HCT116 (cell line): ENCODE measurements at regions of chr11 and their contacts with region 1.

Region 1: GRCh38 chr11:8964324-8965320 is at the start of gene TMEM9B:
- DNase-seq: peak; percentile 78
- ATAC-seq: peak; percentile 86
- H3K4me3 ChIP-seq: peak within 1 kb of the TSS; percentile 85 to 88
- H3K27ac ChIP-seq: peak within 1 kb of the TSS; percentile 97
- H3K4me1 ChIP-seq: peaks cover 10 to 25% of the 10 kb centered on the region in 2 experiments
- H3K27me3 ChIP-seq: no peaks in the 10 kb centered on the region
- CTCF ChIP-seq: no peak
- POLR2A ChIP-seq: peak; percentile 66
- RAD21 ChIP-seq: no peak
- total RNA-seq, gene TMEM9B: 26.8 TPM

Region 2: GRCh38 chr11:8688414-8689362 is 275.9 kb before region 1 on chr11:
- CTCF ChIA-PET with region 1: interaction called, 4 read pairs
- POLR2A ChIA-PET with region 1: interaction called, 3 read pairs
- RAD21 ChIA-PET with region 1: interaction called in 1 of 2 experiments, 3 read pairs
- intact Hi-C with region 1: loop called (anchors 5 kb)
- DNase-seq: peak; percentile 97
- ATAC-seq: peak; percentile 86
- H3K4me3 ChIP-seq: peak overlapping the region; percentile 63
- H3K27ac ChIP-seq: peak overlapping the region; percentile 97
- H3K4me1 ChIP-seq: peaks cover 27 to 59% of the 10 kb centered on the region in 2 experiments
- H3K27me3 ChIP-seq: no peaks in the 10 kb centered on the region
- CTCF ChIP-seq: peak in 1 of 3 experiments; percentile 13; a peak in 2 of 6 replicates
- POLR2A ChIP-seq: peak; percentile 90
- RAD21 ChIP-seq: no peak

Region 3: DNA sequence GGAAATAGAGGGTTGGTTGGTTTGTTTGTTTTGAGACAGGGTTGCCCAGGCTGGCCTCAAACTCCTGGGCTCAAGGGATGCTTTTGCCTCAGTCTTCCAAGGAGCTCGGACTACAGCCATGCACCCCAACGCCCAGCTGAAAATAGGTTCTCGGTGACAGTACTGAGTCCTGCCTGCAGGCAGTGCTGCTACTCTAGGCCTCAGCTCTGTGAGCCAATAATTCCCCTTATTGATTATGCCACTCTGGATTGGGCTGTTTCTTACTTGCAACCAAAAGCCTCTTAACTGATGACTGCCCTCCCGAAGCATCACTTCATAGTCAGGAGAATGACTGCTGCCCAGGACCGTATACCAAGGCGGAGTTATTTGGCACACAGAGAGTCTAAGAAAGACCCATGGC is 30.7 kb before region 1 on chr11:
- CTCF ChIA-PET with region 1: interaction called, 10 read pairs
- POLR2A ChIA-PET with region 1: interaction called, 3 read pairs
- RAD21 ChIA-PET with region 1: interaction called in 1 of 2 experiments, 5 read pairs
- intact Hi-C with region 1: no loop called
- DNase-seq: no peak
- ATAC-seq: peak; percentile 37
- H3K4me3 ChIP-seq: no peak overlapping the region
- H3K27ac ChIP-seq: no peak overlapping the region
- H3K4me1 ChIP-seq: peaks cover 12 to 20% of the 10 kb centered on the region in 2 experiments
- H3K27me3 ChIP-seq: no peaks in the 10 kb centered on the region
- CTCF ChIP-seq: peak in 2 of 3 experiments; percentile 33 to 46; a peak in 1 of 6 replicates
- POLR2A ChIP-seq: no peak
- RAD21 ChIP-seq: peak; percentile 47

Region 4: DNA sequence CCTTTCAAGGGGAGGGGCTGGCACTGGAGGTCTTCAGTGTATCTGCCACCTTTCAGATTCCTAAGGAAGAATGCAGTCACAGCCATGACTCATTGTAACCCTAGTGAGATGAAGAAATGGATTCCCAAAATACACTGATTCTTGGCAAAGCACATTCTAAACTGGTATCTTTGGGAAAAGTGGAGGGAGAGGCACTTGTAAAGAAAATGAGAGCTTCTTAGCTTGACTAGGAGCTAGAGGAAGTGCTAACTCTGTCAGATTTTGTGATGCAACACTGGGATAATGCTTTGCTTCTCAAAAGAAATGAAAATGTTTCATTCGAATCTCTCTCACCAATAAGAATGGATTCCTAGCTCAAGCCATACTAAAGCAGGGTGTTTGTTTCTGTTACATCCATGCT is 24.8 kb after region 1 on chr11:
- CTCF ChIA-PET with region 1: no interaction called
- POLR2A ChIA-PET with region 1: no interaction called
- RAD21 ChIA-PET with region 1: no interaction called
- intact Hi-C with region 1: no loop called
- DNase-seq: no peak
- ATAC-seq: no peak; the same call in 1 of the 2 replicates
- H3K4me3 ChIP-seq: no peak overlapping the region
- H3K27ac ChIP-seq: no peak overlapping the region
- H3K4me1 ChIP-seq: peaks cover 0 to 12% of the 10 kb centered on the region in 2 experiments; a peak in 2 of 4 replicates
- H3K27me3 ChIP-seq: no peaks in the 10 kb centered on the region
- CTCF ChIP-seq: no peak
- POLR2A ChIP-seq: no peak
- RAD21 ChIP-seq: no peak

Region 5: GRCh38 chr11:9053316-9054035 is 88.9 kb after region 1 on chr11:
- CTCF ChIA-PET with region 1: no interaction called
- POLR2A ChIA-PET with region 1: no interaction called
- RAD21 ChIA-PET with region 1: no interaction called
- intact Hi-C with region 1: no loop called
- DNase-seq: no peak
- ATAC-seq: no peak
- H3K4me3 ChIP-seq: no peak overlapping the region
- H3K27ac ChIP-seq: no peak overlapping the region
- H3K4me1 ChIP-seq: no peaks in the 10 kb centered on the region
- H3K27me3 ChIP-seq: no peaks in the 10 kb centered on the region
- CTCF ChIP-seq: no peak
- POLR2A ChIP-seq: no peak
- RAD21 ChIP-seq: no peak

Region 6: GRCh38 chr11:9137293-9138132 is 172.9 kb after region 1 on chr11:
- CTCF ChIA-PET with region 1: interaction called, 7 read pairs
- POLR2A ChIA-PET with region 1: interaction called, 3 read pairs
- RAD21 ChIA-PET with region 1: no interaction called
- intact Hi-C with region 1: loop called (anchors 5 kb)
- DNase-seq: peak; percentile 36
- ATAC-seq: peak; percentile 90
- H3K4me3 ChIP-seq: no peak overlapping the region
- H3K27ac ChIP-seq: no peak overlapping the region; the same call in 1 of the 2 replicates
- H3K4me1 ChIP-seq: peaks cover 33 to 35% of the 10 kb centered on the region in 2 experiments
- H3K27me3 ChIP-seq: no peaks in the 10 kb centered on the region
- CTCF ChIP-seq: peak; percentile 73 to 97 (median 91)
- POLR2A ChIP-seq: no peak
- RAD21 ChIP-seq: peak; percentile 88